Breast epithelium (tissue), 4 donors: ENCODE measurements at regions of chr10 and their contacts with region 1.

Region 1: DNA sequence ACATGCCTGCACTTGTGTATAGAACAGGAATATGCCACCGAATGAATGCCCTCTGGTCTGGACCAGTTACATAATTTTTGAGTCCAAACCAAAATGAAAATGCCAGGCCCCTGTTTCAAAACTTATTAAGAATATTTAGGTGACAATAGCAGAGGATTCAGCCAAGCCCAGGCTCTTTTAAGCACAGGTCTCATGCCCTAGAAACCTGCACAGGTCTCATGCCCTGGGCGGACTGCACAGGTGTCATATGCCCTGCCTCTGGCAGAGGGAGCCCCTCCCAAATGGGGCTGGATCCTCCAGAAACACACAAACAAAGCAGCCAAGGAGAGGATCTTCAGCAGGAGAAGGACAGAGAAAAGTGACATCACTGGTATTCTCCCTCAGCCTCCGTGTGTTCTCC is 605.4 kb upstream of the NRP1 start:
- DNase-seq: peak in 1 of 2 donors; percentile 63
- H3K4me3 ChIP-seq: no peak overlapping the region
- H3K27ac ChIP-seq: peak overlapping the region; percentile 26 to 38
- H3K4me1 ChIP-seq: no peaks in the 10 kb centered on the region
- H3K27me3 ChIP-seq: no peaks in the 10 kb centered on the region
- CTCF ChIP-seq: no peak
- POLR2A ChIP-seq: no peak

Region 2: DNA sequence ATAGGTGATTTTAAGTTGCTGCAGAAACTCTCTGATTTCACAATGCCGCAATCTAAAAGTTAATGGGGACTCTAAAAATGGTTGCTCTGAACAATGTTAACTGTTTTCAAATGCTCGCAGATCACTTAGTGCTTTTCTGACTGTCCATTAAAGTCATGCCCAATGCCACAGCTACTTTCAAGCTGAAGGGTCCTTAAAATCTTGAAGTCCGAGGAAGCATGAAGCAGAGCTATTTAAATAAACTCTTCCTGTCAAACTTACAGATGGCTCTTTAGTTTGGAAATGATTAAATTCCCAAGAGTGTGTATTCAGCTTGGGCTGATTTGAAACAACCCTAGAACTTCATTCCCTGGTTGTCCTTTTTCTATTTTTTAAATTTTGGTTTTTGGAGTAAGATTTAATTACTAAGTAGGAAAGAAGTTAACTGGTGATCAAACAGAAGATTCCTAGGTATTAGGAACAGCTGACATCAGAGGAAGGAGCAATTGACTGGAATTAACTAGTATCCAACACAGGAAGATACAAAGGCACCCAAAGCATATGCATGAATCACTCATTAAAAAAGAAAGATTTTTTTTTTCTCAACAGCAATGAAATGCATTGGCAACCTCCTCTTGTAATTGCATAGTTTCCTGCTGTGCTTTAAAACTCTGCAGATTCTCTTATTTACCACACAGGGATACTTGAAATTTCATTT is 710.5 kb before region 1 on chr10:
- intact Hi-C with region 1: no loop called
- DNase-seq: no peak
- H3K4me3 ChIP-seq: no peak overlapping the region
- H3K27ac ChIP-seq: no peak overlapping the region
- H3K4me1 ChIP-seq: no peaks in the 10 kb centered on the region
- H3K27me3 ChIP-seq: no peaks in the 10 kb centered on the region
- CTCF ChIP-seq: no peak
- POLR2A ChIP-seq: no peak

Region 3: DNA sequence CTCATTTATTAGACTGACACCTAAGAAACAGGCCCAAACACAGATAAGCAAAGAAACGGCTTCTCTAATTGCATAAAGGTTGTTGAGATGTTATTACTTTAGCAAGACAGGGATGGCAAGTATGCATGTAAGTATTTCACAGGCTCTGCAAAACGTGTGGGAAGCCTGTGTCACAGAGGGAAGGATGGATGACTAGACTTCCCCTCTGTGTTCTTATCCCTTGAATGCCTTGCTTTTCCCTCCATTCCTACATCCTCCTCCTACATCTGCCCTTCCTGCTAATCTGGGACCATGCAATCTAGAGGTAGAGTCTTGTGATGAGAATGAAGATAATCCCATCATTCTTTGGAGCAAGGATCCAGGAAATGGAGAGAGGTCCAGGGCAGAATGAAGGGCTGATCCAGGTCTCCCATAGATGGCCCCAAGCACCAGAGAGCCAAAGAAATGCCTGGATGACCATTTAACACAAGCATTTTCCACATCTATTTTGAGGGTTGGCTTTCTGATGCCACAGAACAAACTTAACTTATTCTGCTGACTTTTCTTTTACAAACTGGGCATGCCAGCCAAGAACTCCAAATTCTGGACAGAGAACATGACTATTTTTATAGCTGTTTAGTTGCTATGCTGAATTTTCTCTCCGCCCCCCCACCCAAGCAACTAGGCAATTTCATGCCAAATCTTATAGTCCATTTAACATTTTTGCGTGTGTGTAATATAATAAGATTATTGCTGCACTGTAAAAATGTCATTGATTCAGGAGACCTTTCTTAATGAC is 653.5 kb before region 1 on chr10:
- intact Hi-C with region 1: loop called (anchors 5 kb)
- DNase-seq: no peak
- H3K4me3 ChIP-seq: no peak overlapping the region
- H3K27ac ChIP-seq: no peak overlapping the region
- H3K4me1 ChIP-seq: no peaks in the 10 kb centered on the region
- H3K27me3 ChIP-seq: no peaks in the 10 kb centered on the region
- CTCF ChIP-seq: no peak
- POLR2A ChIP-seq: no peak